ENCODE measurements at regions of chr3 and their contacts with region 1.

Region 1: GRCh38 chr3:148955544-148956346 is 35.6 kb upstream of the GYG1 start:
- DNase-seq: peak; percentile 32
- H3K4me3 Mint-ChIP-seq: no peak overlapping the region
- H3K27ac Mint-ChIP-seq: no peak overlapping the region
- H3K4me1 Mint-ChIP-seq: peaks cover 7% of the 10 kb centered on the region
- H3K27me3 Mint-ChIP-seq: no peaks in the 10 kb centered on the region

Region 2: GRCh38 chr3:149009732-149010131 is 54.0 kb after region 1 on chr3:
- CTCF ChIA-PET with region 1: no interaction called
- intact Hi-C with region 1: no loop called
- DNase-seq: no peak
- H3K4me3 Mint-ChIP-seq: no peak overlapping the region
- H3K27ac Mint-ChIP-seq: no peak overlapping the region
- H3K4me1 Mint-ChIP-seq: no peaks in the 10 kb centered on the region
- H3K27me3 Mint-ChIP-seq: no peaks in the 10 kb centered on the region

Region 3: GRCh38 chr3:149273096-149273751 is 317.5 kb after region 1 on chr3:
- CTCF ChIA-PET with region 1: interaction called, 19 read pairs
- intact Hi-C with region 1: loop called (anchors 1 kb)
- DNase-seq: peak; percentile 34
- H3K4me3 Mint-ChIP-seq: no peak overlapping the region
- H3K27ac Mint-ChIP-seq: no peak overlapping the region
- H3K4me1 Mint-ChIP-seq: peaks cover 10% of the 10 kb centered on the region
- H3K27me3 Mint-ChIP-seq: no peaks in the 10 kb centered on the region